CD8-positive, alpha-beta memory T cell (primary cell): ENCODE measurements at regions of chr16 and their contacts with region 1.

Region 1: GRCh38 chr16:57462209-57462977 is at the start of gene POLR2C:
- DNase-seq: peak; percentile 87 to 94 (median 89)
- H3K4me3 ChIP-seq: peak within 1 kb of the TSS; percentile 92
- H3K4me3 Mint-ChIP-seq: peak within 1 kb of the TSS; percentile 85 to 100 (median 99)
- H3K27ac ChIP-seq: peak within 1 kb of the TSS; percentile 81
- H3K27ac Mint-ChIP-seq: peak within 1 kb of the TSS; percentile 58 to 100 (median 99)
- H3K4me1 ChIP-seq: peaks cover 19% of the 10 kb centered on the region
- H3K4me1 Mint-ChIP-seq: peaks cover 36 to 39% (median 38%) of the 10 kb centered on the region in 3 donors
- H3K27me3 ChIP-seq: no peaks in the 10 kb centered on the region
- H3K27me3 Mint-ChIP-seq: peaks cover 0 to 4% of the 10 kb centered on the region in 2 donors
- total RNA-seq, gene POLR2C: 92.3 to 95.0 TPM

Region 2: DNA sequence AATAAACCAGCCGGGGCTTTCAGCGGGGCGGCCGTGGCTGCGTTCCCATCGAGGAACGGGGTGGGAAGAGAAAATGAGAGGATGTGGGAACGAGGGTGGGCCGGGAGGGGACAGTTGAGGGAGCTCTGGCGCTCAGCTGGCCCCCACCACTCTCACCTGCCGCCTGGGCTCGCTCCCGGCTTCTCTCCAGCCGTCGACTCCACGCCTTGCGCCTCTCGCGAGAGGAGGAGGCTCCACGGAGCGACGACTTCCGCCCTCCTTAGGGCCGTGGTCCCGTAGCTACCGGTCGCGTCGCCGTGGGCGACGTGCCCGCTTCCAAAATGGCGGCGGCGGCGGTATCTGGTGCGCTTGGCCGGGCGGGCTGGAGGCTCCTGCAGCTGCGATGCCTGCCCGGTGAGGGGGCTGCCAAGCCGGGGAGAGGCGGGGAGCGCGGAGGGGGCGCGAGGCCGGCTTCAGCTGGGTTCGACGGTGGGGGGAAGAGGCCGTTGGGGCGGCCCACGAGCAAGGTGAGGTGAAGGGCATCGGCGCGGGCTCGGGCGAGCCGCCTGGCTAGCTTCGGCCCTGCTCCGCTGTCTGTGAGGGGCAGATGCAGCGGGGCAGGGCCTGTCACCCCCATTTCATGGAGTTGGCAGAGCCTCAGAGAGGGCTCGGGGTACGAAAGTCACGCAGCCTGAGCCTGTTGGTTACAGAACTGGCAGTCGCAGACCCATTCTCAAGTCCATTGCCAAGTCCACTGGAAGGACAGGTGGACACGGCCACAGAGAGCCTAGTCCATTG is 15.0 kb before region 1 on chr16 and contains the starts of genes CIAPIN1 and COQ9:
- CTCF ChIA-PET with region 1: interaction called, 34 read pairs
- POLR2A ChIA-PET with region 1: interaction called, 22 read pairs
- DNase-seq: peak; percentile 88 to 96 (median 90)
- H3K4me3 ChIP-seq: peak within 1 kb of the TSS; percentile 93
- H3K4me3 Mint-ChIP-seq: peak within 1 kb of the TSS; percentile 88 to 97 (median 90)
- H3K27ac ChIP-seq: peak within 1 kb of the TSS; percentile 88
- H3K27ac Mint-ChIP-seq: peak within 1 kb of the TSS; percentile 81 to 97 (median 92)
- H3K4me1 ChIP-seq: peaks cover 26% of the 10 kb centered on the region
- H3K4me1 Mint-ChIP-seq: peaks cover 28 to 46% (median 37%) of the 10 kb centered on the region in 3 donors
- H3K27me3 ChIP-seq: no peaks in the 10 kb centered on the region
- H3K27me3 Mint-ChIP-seq: no peaks in the 10 kb centered on the region
- total RNA-seq, gene CIAPIN1: 79.0 to 81.1 TPM
- total RNA-seq, gene COQ9: 50.5 to 51.9 TPM

Region 3: DNA sequence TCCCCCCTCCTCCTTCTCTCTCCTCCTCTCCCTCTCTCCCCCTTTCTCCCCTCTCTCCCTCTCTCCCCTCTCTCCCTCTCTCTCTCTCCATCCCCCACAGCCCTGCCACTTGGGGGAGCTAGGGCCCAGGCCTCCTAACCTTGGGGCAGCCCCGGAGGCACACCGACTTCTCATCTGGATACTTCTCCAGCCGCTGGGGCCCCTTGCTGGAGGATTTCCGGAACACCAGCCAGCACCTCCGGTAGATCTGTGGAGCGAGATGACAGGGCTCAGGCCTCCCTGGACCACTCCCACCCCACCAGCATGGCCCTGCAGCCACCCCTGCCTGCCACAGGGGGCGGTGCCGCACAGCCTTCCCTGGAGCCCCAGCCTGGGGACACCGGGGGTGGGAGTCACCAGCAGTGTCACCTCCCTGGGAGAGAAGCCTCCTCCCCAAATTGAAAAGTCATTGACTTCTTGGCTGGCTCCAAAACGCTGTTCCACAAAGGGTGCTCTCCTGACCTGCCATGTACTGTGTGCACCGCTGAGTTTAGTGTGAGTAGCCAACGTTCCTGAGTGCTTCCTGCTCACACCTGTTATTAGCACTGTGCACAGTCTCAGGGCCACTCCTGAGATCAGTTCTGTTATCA is 13.4 kb after region 1 on chr16:
- CTCF ChIA-PET with region 1: interaction called, 10 read pairs
- POLR2A ChIA-PET with region 1: interaction called, 3 read pairs
- DNase-seq: peak; percentile 56 to 80 (median 72)
- H3K4me3 ChIP-seq: no peak overlapping the region
- H3K4me3 Mint-ChIP-seq: peak overlapping the region in 5 of 7 donors; percentile 20 to 63 (median 39)
- H3K27ac ChIP-seq: no peak overlapping the region
- H3K27ac Mint-ChIP-seq: peak overlapping the region; percentile 29 to 80 (median 59)
- H3K4me1 ChIP-seq: peaks cover 16% of the 10 kb centered on the region
- H3K4me1 Mint-ChIP-seq: peaks cover 7 to 24% (median 8%) of the 10 kb centered on the region in 3 donors
- H3K27me3 ChIP-seq: no peaks in the 10 kb centered on the region
- H3K27me3 Mint-ChIP-seq: no peaks in the 10 kb centered on the region